Right cardiac atrium (tissue), 5 donors: ENCODE measurements at regions of chr3 and their contacts with region 1.

Region 1: GRCh38 chr3:29764603-29765254 is 483.9 kb downstream of the RBMS3 start:
- DNase-seq: no peak
- ATAC-seq: peak; percentile 63 to 72
- H3K4me3 ChIP-seq: no peak overlapping the region
- H3K27ac ChIP-seq: no peak overlapping the region
- H3K4me1 ChIP-seq: peaks cover 3% of the 10 kb centered on the region
- H3K27me3 ChIP-seq: no peaks in the 10 kb centered on the region

Region 2: GRCh38 chr3:28916713-28917499 is 847.8 kb before region 1 on chr3:
- intact Hi-C with region 1: loop called in 2 of 4 experiments (anchors 10 kb)
- DNase-seq: peak; percentile 77 to 87 (median 82)
- ATAC-seq: peak; percentile 97 to 98
- H3K4me3 ChIP-seq: peak overlapping the region; percentile 9
- H3K27ac ChIP-seq: no peak overlapping the region
- H3K4me1 ChIP-seq: peaks cover 2% of the 10 kb centered on the region
- H3K27me3 ChIP-seq: no peaks in the 10 kb centered on the region

Region 3: DNA sequence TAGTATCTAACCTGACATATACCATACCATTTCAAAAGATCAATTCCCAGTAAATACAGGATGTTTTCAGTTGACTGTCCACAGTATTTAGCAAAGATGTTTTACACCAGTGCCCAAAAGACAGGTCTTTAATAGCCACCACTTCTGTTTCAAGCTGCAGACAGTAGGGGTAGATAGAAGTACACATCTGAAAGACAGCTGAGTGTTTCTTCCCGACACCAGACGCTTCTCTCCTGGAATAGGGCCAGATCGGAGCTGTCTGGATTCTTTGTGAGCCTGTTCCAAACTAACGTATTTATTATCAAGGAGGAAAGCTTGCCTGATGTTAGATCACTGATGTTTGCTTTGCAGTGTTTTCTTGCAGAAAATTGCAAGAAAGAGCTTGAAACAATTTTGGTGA is 619.9 kb before region 1 on chr3:
- intact Hi-C with region 1: loop called in 3 of 4 experiments (anchors 5 to 10 kb)
- DNase-seq: peak; percentile 30 to 59 (median 49)
- ATAC-seq: peak; percentile 70 to 81
- H3K4me3 ChIP-seq: peak overlapping the region; percentile 20
- H3K27ac ChIP-seq: no peak overlapping the region
- H3K4me1 ChIP-seq: no peaks in the 10 kb centered on the region
- H3K27me3 ChIP-seq: no peaks in the 10 kb centered on the region

Region 4: DNA sequence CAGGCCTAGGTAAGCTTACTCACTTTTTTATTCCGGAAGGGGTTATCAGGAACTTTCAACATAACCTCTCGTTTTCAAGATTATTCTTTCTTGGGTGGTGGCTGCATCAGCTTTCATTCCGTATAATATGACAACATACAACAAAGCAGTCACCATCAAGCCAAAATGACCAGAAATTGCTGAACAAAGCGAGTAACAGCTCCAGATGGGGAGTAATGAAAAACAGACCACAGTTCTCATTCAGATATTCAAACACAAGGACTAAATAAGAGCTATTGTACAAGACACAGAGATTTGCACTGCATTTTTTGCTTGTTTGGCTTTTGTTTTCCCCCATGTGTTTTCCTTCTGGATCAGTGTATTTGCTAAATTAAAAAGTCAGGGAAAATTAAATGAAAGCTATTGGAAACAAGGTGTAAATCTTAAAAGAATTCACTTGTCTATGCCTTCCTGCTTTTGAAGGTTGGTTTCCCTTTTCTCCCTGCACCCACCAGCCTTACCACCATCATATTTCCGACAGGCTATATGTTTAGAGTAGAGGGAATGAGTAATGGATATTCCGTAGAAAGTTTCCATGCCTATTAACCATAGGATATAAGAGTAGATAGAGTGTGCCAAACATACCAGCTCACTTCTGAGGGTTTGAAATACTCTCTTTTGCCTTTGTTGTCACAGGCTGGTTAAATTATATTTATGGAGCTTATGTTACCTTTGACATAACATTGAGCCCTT is 270.3 kb before region 1 on chr3:
- intact Hi-C with region 1: no loop called
- DNase-seq: no peak
- ATAC-seq: peak in 1 of 2 donors; percentile 45
- H3K4me3 ChIP-seq: no peak overlapping the region
- H3K27ac ChIP-seq: no peak overlapping the region
- H3K4me1 ChIP-seq: no peaks in the 10 kb centered on the region
- H3K27me3 ChIP-seq: no peaks in the 10 kb centered on the region